ENCODE measurements at regions of chr17 and their contacts with region 1.

Region 1: GRCh38 chr17:40075201-40075941 is 12.6 kb downstream of the THRA start:
- DNase-seq: peak; percentile 72
- H3K4me3 Mint-ChIP-seq: no peak overlapping the region
- H3K27ac Mint-ChIP-seq: peak overlapping the region; percentile 77
- H3K4me1 Mint-ChIP-seq: peaks cover 23% of the 10 kb centered on the region
- H3K27me3 Mint-ChIP-seq: no peaks in the 10 kb centered on the region

Region 2: GRCh38 chr17:39916918-39917317 is 158.5 kb before region 1 on chr17:
- CTCF ChIA-PET with region 1: no interaction called
- POLR2A ChIA-PET with region 1: no interaction called
- DNase-seq: no peak
- H3K4me3 Mint-ChIP-seq: no peak overlapping the region
- H3K27ac Mint-ChIP-seq: peak overlapping the region; percentile 27
- H3K4me1 Mint-ChIP-seq: peaks cover 52% of the 10 kb centered on the region
- H3K27me3 Mint-ChIP-seq: no peaks in the 10 kb centered on the region

Region 3: GRCh38 chr17:40062329-40063186 is 12.8 kb before region 1 on chr17 and contains the start of gene THRA:
- CTCF ChIA-PET with region 1: interaction called, 74 read pairs
- POLR2A ChIA-PET with region 1: no interaction called
- DNase-seq: peak; percentile 65
- H3K4me3 Mint-ChIP-seq: peak within 1 kb of the TSS; percentile 81
- H3K27ac Mint-ChIP-seq: peak within 1 kb of the TSS; percentile 41
- H3K4me1 Mint-ChIP-seq: peaks cover 41% of the 10 kb centered on the region
- H3K27me3 Mint-ChIP-seq: peaks cover 40% of the 10 kb centered on the region
- total RNA-seq, gene THRA: 8.6 to 9.1 TPM

Region 4: GRCh38 chr17:40086150-40087044 is 11.0 kb after region 1 on chr17:
- CTCF ChIA-PET with region 1: interaction called, 32 read pairs
- POLR2A ChIA-PET with region 1: no interaction called
- DNase-seq: peak; percentile 58
- H3K4me3 Mint-ChIP-seq: no peak overlapping the region
- H3K27ac Mint-ChIP-seq: no peak overlapping the region
- H3K4me1 Mint-ChIP-seq: peaks cover 8% of the 10 kb centered on the region
- H3K27me3 Mint-ChIP-seq: no peaks in the 10 kb centered on the region

Region 5: GRCh38 chr17:40098846-40099618 is 23.7 kb after region 1 on chr17:
- CTCF ChIA-PET with region 1: interaction called, 27 read pairs
- POLR2A ChIA-PET with region 1: no interaction called
- DNase-seq: peak; percentile 96
- H3K4me3 Mint-ChIP-seq: peak overlapping the region; percentile 82
- H3K27ac Mint-ChIP-seq: peak overlapping the region; percentile 91
- H3K4me1 Mint-ChIP-seq: peaks cover 87% of the 10 kb centered on the region
- H3K27me3 Mint-ChIP-seq: no peaks in the 10 kb centered on the region